ENCODE measurements at regions of chr6 and their contacts with region 1.

Region 1: GRCh38 chr6:156686995-156687788 is 90.0 kb upstream of the ARID1B start:
- DNase-seq: peak; percentile 80 to 90 (median 85)
- H3K4me3 ChIP-seq: peak overlapping the region; percentile 68 to 92
- H3K4me3 Mint-ChIP-seq: peak overlapping the region; percentile 88 to 95 (median 92)
- H3K27ac ChIP-seq: peak overlapping the region; percentile 95
- H3K27ac Mint-ChIP-seq: peak overlapping the region; percentile 88 to 98 (median 97)
- H3K4me1 ChIP-seq: peaks cover 14% of the 10 kb centered on the region
- H3K4me1 Mint-ChIP-seq: peaks cover 10 to 24% (median 15%) of the 10 kb centered on the region in 4 donors
- H3K27me3 ChIP-seq: peaks cover 4% of the 10 kb centered on the region
- H3K27me3 Mint-ChIP-seq: no peaks in the 10 kb centered on the region

Region 2: DNA sequence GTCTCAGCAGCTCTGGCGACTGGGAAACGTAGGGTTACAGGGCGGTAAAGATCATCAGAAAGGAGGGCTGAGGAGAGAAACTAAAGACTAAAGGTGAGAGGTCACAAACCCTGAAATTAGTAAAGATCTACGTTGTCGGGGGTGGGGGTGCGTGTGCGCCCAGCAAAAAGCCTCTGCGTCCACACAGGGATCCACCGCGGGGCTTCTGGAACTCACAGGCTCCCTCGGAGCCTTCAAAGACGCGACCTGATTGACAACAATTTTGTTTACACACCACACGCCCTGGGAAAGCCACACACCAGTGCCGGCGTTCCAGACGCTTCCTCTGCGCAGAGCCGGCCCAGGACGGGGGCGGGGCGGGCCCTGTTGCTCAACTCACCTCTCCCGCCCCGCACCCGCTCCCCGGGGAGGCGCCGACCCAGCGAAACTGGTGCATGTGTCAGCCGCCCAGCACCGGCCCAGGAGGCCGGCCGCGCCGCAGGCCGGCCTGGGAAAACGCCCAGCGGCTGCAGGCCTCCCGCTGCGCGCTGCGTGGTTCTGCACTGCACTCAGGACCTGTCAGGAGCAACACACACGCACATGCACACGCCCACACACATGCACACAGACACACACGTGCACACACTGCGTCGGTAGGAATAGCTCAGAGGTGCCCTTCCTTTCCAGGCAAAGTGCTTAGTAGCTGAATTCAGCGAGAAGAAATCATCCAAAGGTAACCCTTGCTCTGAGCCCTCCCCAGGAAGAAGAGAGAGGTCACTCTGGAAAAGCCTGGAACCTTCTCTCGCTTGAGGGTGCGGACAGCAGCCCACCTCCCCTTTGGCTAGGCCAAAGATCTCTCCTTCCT is 32.8 kb after region 1 on chr6:
- CTCF ChIA-PET with region 1: interaction called, 5 read pairs
- POLR2A ChIA-PET with region 1: interaction called, 19 read pairs
- intact Hi-C with region 1: loop called (anchors 2 kb)
- DNase-seq: peak; percentile 71 to 81 (median 75)
- H3K4me3 ChIP-seq: peak overlapping the region; percentile 71 to 84
- H3K4me3 Mint-ChIP-seq: peak overlapping the region; percentile 87 to 94 (median 90)
- H3K27ac ChIP-seq: peak overlapping the region; percentile 43
- H3K27ac Mint-ChIP-seq: peak overlapping the region; percentile 79 to 95 (median 93)
- H3K4me1 ChIP-seq: peaks cover 8% of the 10 kb centered on the region
- H3K4me1 Mint-ChIP-seq: peaks cover 12 to 19% (median 17%) of the 10 kb centered on the region in 4 donors
- H3K27me3 ChIP-seq: no peaks in the 10 kb centered on the region
- H3K27me3 Mint-ChIP-seq: no peaks in the 10 kb centered on the region

Region 3: DNA sequence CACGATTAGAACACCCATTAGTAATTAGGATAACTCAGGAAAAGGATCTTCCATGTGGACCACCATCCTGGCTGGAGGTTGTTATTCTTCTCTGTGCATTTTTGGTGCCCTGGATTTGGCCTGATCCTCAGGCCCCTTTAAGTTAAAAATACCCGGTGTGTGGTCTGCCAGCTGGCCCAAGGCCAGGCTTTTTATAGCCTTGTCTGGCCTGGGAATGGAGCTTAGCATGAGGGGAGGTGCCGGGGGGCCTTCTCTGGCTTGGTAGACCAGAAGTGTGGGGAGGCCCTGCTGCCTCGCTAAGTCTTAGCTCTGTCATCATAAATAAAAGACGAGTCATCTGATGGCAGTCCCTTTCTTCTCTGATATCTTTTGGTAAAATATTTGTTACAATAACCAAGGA is 161.3 kb after region 1 on chr6:
- CTCF ChIA-PET with region 1: no interaction called
- POLR2A ChIA-PET with region 1: no interaction called
- intact Hi-C with region 1: no loop called
- DNase-seq: no peak
- H3K4me3 ChIP-seq: no peak overlapping the region
- H3K4me3 Mint-ChIP-seq: no peak overlapping the region
- H3K27ac ChIP-seq: no peak overlapping the region
- H3K27ac Mint-ChIP-seq: peak overlapping the region in 3 of 7 donors; percentile 4 to 50 (median 33)
- H3K4me1 ChIP-seq: peaks cover 96% of the 10 kb centered on the region
- H3K4me1 Mint-ChIP-seq: peaks cover 59 to 98% (median 85%) of the 10 kb centered on the region in 4 donors
- H3K27me3 ChIP-seq: no peaks in the 10 kb centered on the region
- H3K27me3 Mint-ChIP-seq: no peaks in the 10 kb centered on the region

Region 4: GRCh38 chr6:156925718-156926615 is 238.8 kb after region 1 on chr6:
- CTCF ChIA-PET with region 1: no interaction called
- POLR2A ChIA-PET with region 1: no interaction called
- intact Hi-C with region 1: no loop called
- DNase-seq: no peak
- H3K4me3 ChIP-seq: no peak overlapping the region
- H3K4me3 Mint-ChIP-seq: peak overlapping the region in 3 of 8 donors; percentile 1 to 55 (median 8)
- H3K27ac ChIP-seq: no peak overlapping the region
- H3K27ac Mint-ChIP-seq: no peak overlapping the region
- H3K4me1 ChIP-seq: peaks cover 27% of the 10 kb centered on the region
- H3K4me1 Mint-ChIP-seq: peaks cover 39 to 73% (median 56%) of the 10 kb centered on the region in 4 donors
- H3K27me3 ChIP-seq: no peaks in the 10 kb centered on the region
- H3K27me3 Mint-ChIP-seq: no peaks in the 10 kb centered on the region

Region 5: DNA sequence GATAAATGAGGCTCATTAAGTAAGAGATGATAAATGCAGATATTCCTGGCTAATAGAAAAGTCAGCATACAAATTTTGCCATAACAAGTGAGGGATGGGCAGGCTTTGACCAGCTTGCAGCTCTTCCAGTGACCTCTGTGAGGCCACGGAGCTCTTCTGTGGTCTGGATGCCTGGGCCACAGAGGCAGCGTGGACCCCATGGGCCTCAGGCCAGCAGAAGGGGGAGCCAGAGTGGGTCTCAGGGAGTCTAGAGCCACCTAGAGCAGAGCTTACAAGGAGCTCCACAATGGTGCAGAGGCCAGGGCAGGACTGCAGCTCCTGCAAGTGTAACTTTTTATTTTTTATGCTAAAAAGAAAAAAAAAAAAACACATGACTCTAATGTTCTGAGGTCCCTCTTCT is 255.1 kb after region 1 on chr6:
- CTCF ChIA-PET with region 1: no interaction called
- POLR2A ChIA-PET with region 1: no interaction called
- intact Hi-C with region 1: loop called (anchors 5 kb)
- DNase-seq: no peak
- H3K4me3 ChIP-seq: no peak overlapping the region
- H3K4me3 Mint-ChIP-seq: no peak overlapping the region
- H3K27ac ChIP-seq: no peak overlapping the region
- H3K27ac Mint-ChIP-seq: peak overlapping the region in 2 of 7 donors; percentile 19 to 22
- H3K4me1 ChIP-seq: peaks cover 19% of the 10 kb centered on the region
- H3K4me1 Mint-ChIP-seq: peaks cover 52 to 77% (median 65%) of the 10 kb centered on the region in 4 donors
- H3K27me3 ChIP-seq: no peaks in the 10 kb centered on the region
- H3K27me3 Mint-ChIP-seq: no peaks in the 10 kb centered on the region

Region 6: GRCh38 chr6:157021344-157021992 is 334.3 kb after region 1 on chr6:
- CTCF ChIA-PET with region 1: interaction called, 3 read pairs
- POLR2A ChIA-PET with region 1: interaction called, 10 read pairs
- intact Hi-C with region 1: loop called (anchors 2 kb)
- DNase-seq: peak; percentile 88 to 93 (median 91)
- H3K4me3 ChIP-seq: peak overlapping the region; percentile 54 to 86
- H3K4me3 Mint-ChIP-seq: peak overlapping the region; percentile 95 to 98 (median 96)
- H3K27ac ChIP-seq: peak overlapping the region; percentile 98
- H3K27ac Mint-ChIP-seq: peak overlapping the region; percentile 97 to 100 (median 99)
- H3K4me1 ChIP-seq: peaks cover 31% of the 10 kb centered on the region
- H3K4me1 Mint-ChIP-seq: peaks cover 30 to 55% (median 44%) of the 10 kb centered on the region in 4 donors
- H3K27me3 ChIP-seq: no peaks in the 10 kb centered on the region
- H3K27me3 Mint-ChIP-seq: no peaks in the 10 kb centered on the region

Region 7: GRCh38 chr6:157323255-157323965 is 636.2 kb after region 1 on chr6 and contains the start of gene TMEM242:
- CTCF ChIA-PET with region 1: no interaction called
- POLR2A ChIA-PET with region 1: no interaction called
- intact Hi-C with region 1: loop called (anchors 2 kb)
- DNase-seq: peak; percentile 77 to 86 (median 83)
- H3K4me3 ChIP-seq: peak within 1 kb of the TSS; percentile 79 to 82
- H3K4me3 Mint-ChIP-seq: peak within 1 kb of the TSS; percentile 94 to 97 (median 96)
- H3K27ac ChIP-seq: peak within 1 kb of the TSS; percentile 62
- H3K27ac Mint-ChIP-seq: peak within 1 kb of the TSS; percentile 89 to 94 (median 92)
- H3K4me1 ChIP-seq: peaks cover 16% of the 10 kb centered on the region
- H3K4me1 Mint-ChIP-seq: peaks cover 13 to 27% (median 17%) of the 10 kb centered on the region in 4 donors
- H3K27me3 ChIP-seq: no peaks in the 10 kb centered on the region
- H3K27me3 Mint-ChIP-seq: peaks cover 5 to 10% of the 10 kb centered on the region in 2 donors
- total RNA-seq, gene TMEM242: 12.7 to 14.1 TPM